A673 (cell line): ENCODE measurements at regions of chr10 and their contacts with region 1.

Region 1: GRCh38 chr10:98467506-98468346 is 21.0 kb upstream of the HPS1 start:
- DNase-seq: peak; percentile 86
- H3K4me3 ChIP-seq: peak overlapping the region; percentile 39
- H3K27ac ChIP-seq: no peak overlapping the region
- H3K4me1 ChIP-seq: peaks cover 5% of the 10 kb centered on the region
- H3K27me3 ChIP-seq: peaks cover 32% of the 10 kb centered on the region
- CTCF ChIP-seq: peak; percentile 82

Region 2: GRCh38 chr10:98664331-98665042 is 196.8 kb after region 1 on chr10:
- CTCF ChIA-PET with region 1: interaction called, 3 read pairs
- POLR2A ChIA-PET with region 1: no interaction called
- intact Hi-C with region 1: loop called (anchors 1 kb)
- DNase-seq: peak; percentile 58
- H3K4me3 ChIP-seq: no peak overlapping the region
- H3K27ac ChIP-seq: no peak overlapping the region
- H3K4me1 ChIP-seq: no peaks in the 10 kb centered on the region
- H3K27me3 ChIP-seq: peaks cover 5% of the 10 kb centered on the region
- CTCF ChIP-seq: peak; percentile 69

Region 3: GRCh38 chr10:98748298-98748697 is 280.6 kb after region 1 on chr10:
- CTCF ChIA-PET with region 1: no interaction called
- POLR2A ChIA-PET with region 1: no interaction called
- intact Hi-C with region 1: loop called (anchors 10 kb)
- DNase-seq: peak; percentile 49
- H3K4me3 ChIP-seq: no peak overlapping the region
- H3K27ac ChIP-seq: no peak overlapping the region
- H3K4me1 ChIP-seq: no peaks in the 10 kb centered on the region
- H3K27me3 ChIP-seq: no peaks in the 10 kb centered on the region
- CTCF ChIP-seq: peak; percentile 55

Region 4: GRCh38 chr10:99042051-99042771 is 574.5 kb after region 1 on chr10:
- CTCF ChIA-PET with region 1: no interaction called
- POLR2A ChIA-PET with region 1: no interaction called
- intact Hi-C with region 1: loop called (anchors 5 kb)
- DNase-seq: no peak
- H3K4me3 ChIP-seq: no peak overlapping the region
- H3K27ac ChIP-seq: no peak overlapping the region
- H3K4me1 ChIP-seq: no peaks in the 10 kb centered on the region
- H3K27me3 ChIP-seq: peaks cover 3% of the 10 kb centered on the region
- CTCF ChIP-seq: no peak

Region 5: GRCh38 chr10:99172130-99172738 is 704.5 kb after region 1 on chr10:
- CTCF ChIA-PET with region 1: interaction called, 8 read pairs
- POLR2A ChIA-PET with region 1: no interaction called
- intact Hi-C with region 1: loop called (anchors 2 kb)
- DNase-seq: peak; percentile 67
- H3K4me3 ChIP-seq: no peak overlapping the region
- H3K27ac ChIP-seq: no peak overlapping the region
- H3K4me1 ChIP-seq: no peaks in the 10 kb centered on the region
- H3K27me3 ChIP-seq: no peaks in the 10 kb centered on the region
- CTCF ChIP-seq: peak; percentile 74

Region 6: GRCh38 chr10:99248824-99249223 is 781.1 kb after region 1 on chr10:
- CTCF ChIA-PET with region 1: interaction called, 12 read pairs
- POLR2A ChIA-PET with region 1: no interaction called
- intact Hi-C with region 1: loop called (anchors 1 kb)
- DNase-seq: no peak
- H3K4me3 ChIP-seq: no peak overlapping the region
- H3K27ac ChIP-seq: no peak overlapping the region
- H3K4me1 ChIP-seq: no peaks in the 10 kb centered on the region
- H3K27me3 ChIP-seq: peaks cover 4% of the 10 kb centered on the region
- CTCF ChIP-seq: no peak

Region 7: GRCh38 chr10:99364125-99364524 is 896.4 kb after region 1 on chr10:
- CTCF ChIA-PET with region 1: no interaction called
- POLR2A ChIA-PET with region 1: no interaction called
- intact Hi-C with region 1: loop called (anchors 10 kb)
- DNase-seq: no peak
- H3K4me3 ChIP-seq: no peak overlapping the region
- H3K27ac ChIP-seq: no peak overlapping the region
- H3K4me1 ChIP-seq: no peaks in the 10 kb centered on the region
- H3K27me3 ChIP-seq: peaks cover 20% of the 10 kb centered on the region
- CTCF ChIP-seq: no peak